Tibial artery (tissue), 4 donors: ENCODE measurements at regions of chr10 and their contacts with region 1.

Region 1: GRCh38 chr10:68074775-68075549 is at the start of gene HERC4:
- DNase-seq: peak; percentile 95 to 98
- H3K4me3 ChIP-seq: peak within 1 kb of the TSS; percentile 72 to 99
- H3K27ac ChIP-seq: peak within 1 kb of the TSS; percentile 94 to 99
- H3K4me1 ChIP-seq: peaks cover 0 to 42% (median 15%) of the 10 kb centered on the region in 4 donors
- H3K27me3 ChIP-seq: no peaks in the 10 kb centered on the region
- CTCF ChIP-seq: no peak

Region 2: DNA sequence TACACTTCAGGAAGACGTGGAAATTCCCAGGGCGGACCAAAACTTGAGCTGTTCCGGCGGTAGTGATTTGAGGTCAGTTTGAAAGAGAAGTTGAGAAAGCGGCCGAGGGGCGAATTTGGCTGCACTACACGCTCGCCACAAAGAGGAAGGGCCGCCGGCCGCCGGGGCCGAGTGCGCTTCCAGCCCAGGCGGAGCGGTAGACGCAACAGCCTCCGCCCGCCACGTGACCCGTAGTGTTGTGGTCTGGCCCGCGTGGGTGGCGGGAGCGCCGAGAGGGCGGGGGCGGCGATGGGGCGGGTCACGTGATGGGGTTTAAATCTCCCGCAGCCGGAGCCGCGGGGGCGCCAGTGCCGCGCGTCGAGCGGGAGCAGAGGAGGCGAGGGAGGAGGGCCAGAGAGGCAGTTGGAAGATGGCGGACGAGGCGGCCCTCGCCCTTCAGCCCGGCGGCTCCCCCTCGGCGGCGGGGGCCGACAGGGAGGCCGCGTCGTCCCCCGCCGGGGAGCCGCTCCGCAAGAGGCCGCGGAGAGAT is 190.6 kb before region 1 on chr10 and contains the start of gene SIRT1:
- intact Hi-C with region 1: loop called (anchors 10 kb)
- DNase-seq: peak; percentile 97 to 98
- H3K4me3 ChIP-seq: peak within 1 kb of the TSS; percentile 60 to 82
- H3K27ac ChIP-seq: peak within 1 kb of the TSS; percentile 90 to 99
- H3K4me1 ChIP-seq: peaks cover 0 to 33% (median 7%) of the 10 kb centered on the region in 4 donors
- H3K27me3 ChIP-seq: no peaks in the 10 kb centered on the region
- CTCF ChIP-seq: no peak

Region 3: DNA sequence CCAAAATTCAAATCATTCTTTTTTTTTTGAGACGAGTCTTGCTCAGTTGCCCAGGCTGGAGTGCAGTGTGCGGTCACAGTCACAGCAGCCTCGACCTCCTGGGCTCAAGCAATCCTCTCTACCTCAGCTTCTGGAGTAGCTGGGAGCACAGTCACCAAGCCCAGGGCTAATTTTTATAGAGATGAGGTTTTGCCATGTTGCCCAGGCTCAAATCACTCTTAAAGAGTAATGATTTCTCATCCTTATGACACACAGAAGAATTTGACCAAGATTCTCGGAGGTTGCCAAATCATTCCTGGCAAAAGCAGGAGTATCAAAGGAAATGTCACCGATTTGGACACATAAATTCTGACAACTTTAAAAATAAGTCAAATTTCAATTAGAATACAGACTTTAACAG is 151.4 kb before region 1 on chr10:
- intact Hi-C with region 1: no loop called
- DNase-seq: no peak
- H3K4me3 ChIP-seq: no peak overlapping the region
- H3K27ac ChIP-seq: no peak overlapping the region
- H3K4me1 ChIP-seq: no peaks in the 10 kb centered on the region
- H3K27me3 ChIP-seq: no peaks in the 10 kb centered on the region
- CTCF ChIP-seq: no peak

Region 4: DNA sequence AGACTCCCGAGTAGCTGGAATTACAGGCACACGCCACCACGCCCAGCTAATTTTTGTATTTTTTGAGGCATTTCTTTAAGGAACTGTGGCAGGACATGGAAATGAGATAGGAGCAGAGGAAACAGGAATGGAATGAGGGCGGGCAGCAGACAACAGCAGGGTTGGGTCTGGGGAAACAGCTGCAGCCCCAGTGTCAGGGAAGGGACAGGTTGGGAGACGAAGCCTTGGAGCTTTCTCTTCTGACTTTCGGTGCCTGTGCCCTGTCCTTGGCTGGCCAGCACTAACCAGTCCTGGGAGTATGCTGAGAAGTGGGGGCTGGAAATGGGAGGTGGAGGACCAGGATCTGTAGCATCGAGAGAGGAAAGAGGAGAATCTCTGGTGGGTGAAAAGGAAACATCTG is 109.6 kb after region 1 on chr10:
- intact Hi-C with region 1: no loop called
- DNase-seq: no peak
- H3K4me3 ChIP-seq: no peak overlapping the region
- H3K27ac ChIP-seq: no peak overlapping the region
- H3K4me1 ChIP-seq: no peaks in the 10 kb centered on the region
- H3K27me3 ChIP-seq: peaks cover 0 to 4% of the 10 kb centered on the region in 2 donors
- CTCF ChIP-seq: no peak

Region 5: DNA sequence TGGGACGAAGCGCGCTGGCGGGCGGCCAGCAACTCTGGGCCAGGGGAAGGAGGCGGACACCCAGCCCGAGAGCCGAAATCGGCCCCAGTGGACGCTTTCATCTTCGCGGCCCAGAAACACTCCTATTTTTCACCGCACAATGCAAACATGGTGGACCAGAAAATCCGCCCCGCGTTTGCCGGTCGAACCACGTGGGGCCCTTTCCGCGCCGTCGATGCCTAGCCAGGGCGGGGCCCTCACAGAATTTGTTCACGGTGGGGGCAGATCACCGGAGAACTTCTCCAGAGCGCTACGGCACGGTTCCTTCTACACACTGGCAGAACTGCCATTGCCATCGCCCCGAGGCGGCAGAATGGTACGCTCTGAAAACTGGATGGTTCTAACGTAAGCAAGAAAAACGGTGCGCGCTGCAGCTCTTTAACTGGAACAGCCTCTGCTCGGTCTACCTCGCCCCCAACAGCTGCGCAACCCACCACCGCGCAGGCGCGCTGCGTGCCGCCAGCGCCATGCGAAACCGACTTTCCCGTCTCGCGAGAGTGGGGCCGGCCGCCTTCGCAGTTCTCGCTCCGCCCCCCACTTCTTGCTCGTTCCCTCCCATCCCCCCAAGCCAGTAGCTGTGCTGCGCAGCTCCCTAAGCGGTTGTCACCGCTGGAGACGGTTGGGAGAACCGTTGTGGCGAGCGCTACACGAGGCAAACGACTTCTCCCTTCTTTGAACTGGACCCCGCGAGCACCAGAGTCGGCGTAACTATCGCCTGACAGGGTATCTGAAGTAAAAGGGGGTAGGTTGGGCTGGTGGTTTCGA is 256.7 kb after region 1 on chr10 and contains the start of gene HNRNPH3:
- intact Hi-C with region 1: loop called (anchors 10 kb)
- DNase-seq: peak; percentile 96 to 99
- H3K4me3 ChIP-seq: peak within 1 kb of the TSS; percentile 88 to 92
- H3K27ac ChIP-seq: peak within 1 kb of the TSS; percentile 99 to 100
- H3K4me1 ChIP-seq: peaks cover 0 to 55% (median 19%) of the 10 kb centered on the region in 4 donors
- H3K27me3 ChIP-seq: no peaks in the 10 kb centered on the region
- CTCF ChIP-seq: peak in 1 of 2 experiments; percentile 7